OCI-LY7 (cell line): ENCODE measurements at regions of chr4 and their contacts with region 1.

Region 1: DNA sequence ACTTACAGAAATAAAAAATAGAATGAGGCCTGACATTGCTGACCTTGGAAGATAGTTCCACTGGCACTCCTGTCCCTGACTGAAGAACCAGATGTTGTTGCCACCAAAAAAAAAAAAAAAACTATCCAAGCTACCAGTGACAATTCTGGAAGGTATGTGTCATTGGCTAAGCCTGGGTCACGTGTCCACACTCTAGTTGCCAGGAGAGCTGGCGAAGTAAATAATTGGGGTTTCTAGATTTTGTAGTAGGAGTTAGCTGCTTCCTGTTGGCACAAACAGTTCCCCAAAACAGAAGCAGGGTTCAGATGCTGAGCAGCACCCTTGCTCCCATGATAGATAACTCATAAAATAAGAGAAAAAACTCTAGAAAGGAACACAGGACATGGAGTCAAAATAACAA is 20.5 kb downstream of the MND1 start:
- DNase-seq: no peak
- H3K4me3 ChIP-seq: no peak overlapping the region
- H3K27ac ChIP-seq: no peak overlapping the region
- H3K4me1 ChIP-seq: no peaks in the 10 kb centered on the region
- CTCF ChIP-seq: no peak

Region 2: DNA sequence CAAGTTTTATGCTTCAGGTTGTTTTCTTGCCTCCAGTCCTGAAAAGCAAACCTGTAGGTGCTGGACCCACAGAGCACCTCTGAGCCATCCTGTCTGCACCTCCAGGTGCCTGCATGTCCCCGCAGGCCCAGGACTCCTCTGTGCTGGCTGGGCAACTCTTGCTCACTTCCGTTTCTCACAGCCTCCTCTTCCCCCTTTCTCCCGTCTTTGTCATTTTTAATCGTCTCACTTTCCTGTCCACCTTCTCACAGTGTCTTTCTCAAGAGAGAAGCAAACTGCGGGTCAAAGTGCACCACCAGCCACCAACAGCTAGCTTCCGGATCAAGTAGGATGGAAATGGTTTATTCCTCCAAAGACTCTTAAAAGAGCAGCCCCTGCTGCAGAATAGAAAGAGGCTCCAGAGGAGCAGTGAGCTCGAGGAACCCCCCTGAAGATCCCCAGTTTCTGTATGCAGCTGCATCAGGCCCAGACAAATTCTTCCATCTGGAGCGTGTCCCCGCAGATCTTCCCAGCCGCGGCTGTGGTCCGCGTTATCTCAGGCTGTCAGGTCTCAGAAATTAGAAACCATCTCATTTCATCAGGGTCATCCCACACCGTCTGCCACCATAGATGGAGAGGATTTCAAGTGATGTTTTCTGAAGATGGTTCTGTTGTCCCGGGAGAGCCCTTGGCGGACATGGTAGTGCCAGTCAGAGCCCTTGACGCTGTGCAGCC is 341.2 kb before region 1 on chr4:
- CTCF ChIA-PET with region 1: no interaction called
- POLR2A ChIA-PET with region 1: no interaction called
- intact Hi-C with region 1: no loop called
- DNase-seq: no peak
- H3K4me3 ChIP-seq: no peak overlapping the region
- H3K27ac ChIP-seq: no peak overlapping the region
- H3K4me1 ChIP-seq: no peaks in the 10 kb centered on the region
- CTCF ChIP-seq: no peak

Region 3: DNA sequence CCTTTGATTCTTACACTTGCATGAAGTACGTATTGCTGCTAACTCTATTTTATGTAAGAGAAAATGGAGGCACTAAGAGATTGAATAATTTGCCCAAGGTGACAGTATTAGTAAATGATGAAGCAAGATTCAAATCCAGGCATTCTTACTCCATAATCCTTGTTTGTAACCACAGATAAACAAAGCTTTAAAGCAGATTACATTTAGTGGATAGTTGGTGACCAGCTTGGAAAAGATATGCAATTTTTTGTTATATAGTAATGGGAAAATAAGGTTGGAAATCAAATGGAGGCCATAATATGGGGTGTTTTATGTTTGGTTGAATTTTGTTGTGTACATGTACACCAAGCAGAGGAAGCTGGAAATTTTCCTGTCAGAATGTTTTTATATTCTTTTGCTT is 10.3 kb after region 1 on chr4:
- CTCF ChIA-PET with region 1: no interaction called
- POLR2A ChIA-PET with region 1: interaction called, 11 read pairs
- intact Hi-C with region 1: no loop called
- DNase-seq: no peak
- H3K4me3 ChIP-seq: no peak overlapping the region
- H3K27ac ChIP-seq: no peak overlapping the region
- H3K4me1 ChIP-seq: peaks cover 17% of the 10 kb centered on the region
- CTCF ChIP-seq: no peak

Region 4: DNA sequence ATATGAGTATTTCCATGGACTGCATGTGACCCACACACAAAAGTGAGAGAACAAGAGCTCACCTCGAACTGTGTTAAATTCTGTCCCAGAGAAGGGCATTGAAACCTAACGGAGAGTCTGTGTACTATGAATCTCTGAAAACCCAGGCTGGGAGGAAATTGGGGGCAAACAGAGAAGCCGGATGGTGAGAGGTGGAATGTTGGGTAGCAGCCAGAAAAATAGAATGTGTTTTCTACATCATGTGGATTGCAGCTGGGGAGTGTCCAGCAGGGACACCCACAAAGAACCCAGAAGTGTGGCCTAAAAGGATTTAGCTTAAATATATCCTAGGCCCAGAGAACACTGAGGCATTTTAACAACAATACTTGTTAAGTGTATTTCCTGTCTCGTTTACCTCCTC is 18.1 kb after region 1 on chr4:
- CTCF ChIA-PET with region 1: no interaction called
- POLR2A ChIA-PET with region 1: interaction called, 11 read pairs
- intact Hi-C with region 1: no loop called
- DNase-seq: no peak
- H3K4me3 ChIP-seq: no peak overlapping the region
- H3K27ac ChIP-seq: no peak overlapping the region
- H3K4me1 ChIP-seq: peaks cover 11% of the 10 kb centered on the region
- CTCF ChIP-seq: no peak

Region 5: GRCh38 chr4:153901220-153901619 is 536.2 kb after region 1 on chr4:
- CTCF ChIA-PET with region 1: no interaction called
- POLR2A ChIA-PET with region 1: no interaction called
- intact Hi-C with region 1: no loop called
- DNase-seq: no peak
- H3K4me3 ChIP-seq: no peak overlapping the region
- H3K27ac ChIP-seq: no peak overlapping the region
- H3K4me1 ChIP-seq: no peaks in the 10 kb centered on the region
- CTCF ChIP-seq: no peak